B cell (primary cell): ENCODE measurements at regions of chr6 and their contacts with region 1.

Region 1: DNA sequence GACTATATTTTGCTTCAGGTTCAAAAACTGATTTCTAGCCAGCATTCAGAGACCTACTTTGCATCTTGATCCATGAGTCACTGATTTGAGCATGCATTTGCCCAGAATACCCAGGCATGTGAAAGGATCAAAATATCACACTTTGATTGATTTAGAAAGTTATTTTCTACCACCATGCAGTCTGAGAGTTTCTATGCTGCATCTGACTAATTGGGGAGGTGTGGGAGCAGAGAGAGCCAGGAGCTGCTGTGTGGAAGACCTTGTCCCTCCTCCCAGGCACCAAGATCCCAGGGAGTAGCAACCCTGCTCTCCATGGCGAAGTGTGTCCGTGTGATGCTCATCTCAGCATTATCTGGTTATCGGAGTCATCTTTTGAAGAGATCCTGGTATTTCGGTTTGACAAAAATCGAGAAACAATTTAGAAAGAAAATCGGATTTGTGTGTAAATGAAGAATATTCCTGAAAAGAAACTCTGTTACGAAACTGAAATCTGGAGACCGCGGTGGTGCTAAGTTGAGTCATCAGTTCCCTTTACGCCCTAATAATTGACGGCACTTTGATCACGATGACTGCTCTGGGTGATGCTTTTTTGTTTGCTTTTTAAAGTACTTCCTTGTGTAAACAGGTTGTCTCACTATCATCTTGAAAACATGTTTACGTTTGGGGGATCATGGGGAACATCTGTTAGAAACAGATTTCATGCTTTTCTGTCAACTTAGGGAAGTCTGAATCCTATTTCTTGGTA is 193.4 kb downstream of the BACH2 start:
- DNase-seq: peak; percentile 71
- ATAC-seq: peak; percentile 62
- H3K4me3 ChIP-seq: peak overlapping the region in 2 of 5 experiments; percentile 6 to 40
- H3K4me3 Mint-ChIP-seq: peak overlapping the region; percentile 89
- H3K27ac ChIP-seq: peak overlapping the region in 1 of 2 donors; percentile 78
- H3K27ac Mint-ChIP-seq: peak overlapping the region; percentile 87
- H3K4me1 ChIP-seq: peaks cover 81 to 86% of the 10 kb centered on the region in 2 donors
- H3K4me1 Mint-ChIP-seq: peaks cover 92% of the 10 kb centered on the region
- H3K27me3 ChIP-seq: no peaks in the 10 kb centered on the region
- H3K27me3 Mint-ChIP-seq: no peaks in the 10 kb centered on the region
- CTCF ChIP-seq: no peak

Region 2: GRCh38 chr6:90074161-90074850 is 28.9 kb before region 1 on chr6:
- CTCF ChIA-PET with region 1: interaction called, 3 read pairs
- POLR2A ChIA-PET with region 1: interaction called, 4 read pairs
- intact Hi-C with region 1: loop called (anchors 5 kb)
- DNase-seq: no peak
- ATAC-seq: no peak
- H3K4me3 ChIP-seq: no peak overlapping the region
- H3K4me3 Mint-ChIP-seq: peak overlapping the region; percentile 44
- H3K27ac ChIP-seq: peak overlapping the region in 1 of 2 donors; percentile 35
- H3K27ac Mint-ChIP-seq: peak overlapping the region; percentile 13
- H3K4me1 ChIP-seq: peaks cover 27 to 30% of the 10 kb centered on the region in 2 donors
- H3K4me1 Mint-ChIP-seq: peaks cover 88% of the 10 kb centered on the region
- H3K27me3 ChIP-seq: no peaks in the 10 kb centered on the region
- H3K27me3 Mint-ChIP-seq: no peaks in the 10 kb centered on the region
- CTCF ChIP-seq: no peak

Region 3: GRCh38 chr6:90121982-90122381 is 18.8 kb after region 1 on chr6:
- CTCF ChIA-PET with region 1: interaction called, 3 read pairs
- POLR2A ChIA-PET with region 1: no interaction called
- intact Hi-C with region 1: loop called (anchors 2 kb)
- DNase-seq: peak; percentile 44
- ATAC-seq: peak; percentile 81
- H3K4me3 ChIP-seq: no peak overlapping the region
- H3K4me3 Mint-ChIP-seq: peak overlapping the region; percentile 37
- H3K27ac ChIP-seq: peak overlapping the region in 1 of 2 donors; percentile 72
- H3K27ac Mint-ChIP-seq: peak overlapping the region; percentile 77
- H3K4me1 ChIP-seq: peaks cover 47 to 51% of the 10 kb centered on the region in 2 donors
- H3K4me1 Mint-ChIP-seq: peaks cover 68% of the 10 kb centered on the region
- H3K27me3 ChIP-seq: no peaks in the 10 kb centered on the region
- H3K27me3 Mint-ChIP-seq: no peaks in the 10 kb centered on the region
- CTCF ChIP-seq: no peak

Region 4: GRCh38 chr6:90146921-90147649 is 43.9 kb after region 1 on chr6:
- CTCF ChIA-PET with region 1: no interaction called
- POLR2A ChIA-PET with region 1: no interaction called
- intact Hi-C with region 1: loop called (anchors 5 kb)
- DNase-seq: peak; percentile 52
- ATAC-seq: peak; percentile 41
- H3K4me3 ChIP-seq: peak overlapping the region in 1 of 5 experiments; percentile 30
- H3K4me3 Mint-ChIP-seq: peak overlapping the region; percentile 73
- H3K27ac ChIP-seq: peak overlapping the region in 1 of 2 donors; percentile 17
- H3K27ac Mint-ChIP-seq: peak overlapping the region; percentile 59
- H3K4me1 ChIP-seq: peaks cover 23 to 47% of the 10 kb centered on the region in 2 donors
- H3K4me1 Mint-ChIP-seq: peaks cover 76% of the 10 kb centered on the region
- H3K27me3 ChIP-seq: no peaks in the 10 kb centered on the region
- H3K27me3 Mint-ChIP-seq: no peaks in the 10 kb centered on the region
- CTCF ChIP-seq: no peak